Heart right ventricle (tissue), 16 donors: ENCODE measurements at regions of chr1 and their contacts with region 1.

Region 1: GRCh38 chr1:221741711-221742554 is at the start of gene DUSP10:
- DNase-seq: peak; percentile 96 to 99
- ATAC-seq: peak; percentile 93 to 98 (median 97)
- H3K4me3 ChIP-seq: peak within 1 kb of the TSS; percentile 54 to 86 (median 67)
- H3K27ac ChIP-seq: peak within 1 kb of the TSS; percentile 86 to 100 (median 98)
- H3K4me1 ChIP-seq: peaks cover 3 to 30% (median 18%) of the 10 kb centered on the region in 9 donors
- H3K27me3 ChIP-seq: no peaks in the 10 kb centered on the region
- CTCF ChIP-seq: no peak
- total RNA-seq, gene DUSP10: 1.8 to 9.7 (median 4.0) TPM

Region 2: GRCh38 chr1:221557013-221557412 is 184.9 kb before region 1 on chr1:
- intact Hi-C with region 1: loop called in 2 of 10 experiments (anchors 10 kb)
- DNase-seq: no peak
- ATAC-seq: no peak
- H3K4me3 ChIP-seq: no peak overlapping the region
- H3K27ac ChIP-seq: no peak overlapping the region
- H3K4me1 ChIP-seq: peaks cover 0 to 3% (median 0%) of the 10 kb centered on the region in 9 donors
- H3K27me3 ChIP-seq: no peaks in the 10 kb centered on the region
- CTCF ChIP-seq: no peak

Region 3: DNA sequence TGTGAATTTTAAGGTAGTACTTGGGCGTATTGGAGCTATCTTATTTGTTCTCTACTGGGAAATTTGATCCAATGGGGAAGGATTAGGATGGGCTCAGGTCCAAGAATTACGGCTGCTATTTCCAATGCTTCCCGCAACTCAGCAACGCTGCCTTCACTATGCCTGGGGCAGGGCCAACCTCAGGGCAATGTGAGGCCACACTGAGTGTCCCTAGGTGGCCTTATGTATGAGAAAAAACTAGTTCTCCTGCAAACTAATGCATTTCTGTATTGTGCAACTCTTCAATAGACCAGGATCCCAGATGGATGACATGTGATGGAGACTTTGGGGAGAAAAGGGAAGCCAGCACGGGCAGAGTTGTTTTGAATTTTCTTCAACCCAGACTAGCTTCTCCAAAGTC is 168.2 kb before region 1 on chr1:
- intact Hi-C with region 1: loop called in 2 of 10 experiments (anchors 5 to 10 kb)
- DNase-seq: peak in 1 of 2 donors; percentile 42
- ATAC-seq: peak in 7 of 8 donors; percentile 52 to 94 (median 65)
- H3K4me3 ChIP-seq: no peak overlapping the region
- H3K27ac ChIP-seq: no peak overlapping the region
- H3K4me1 ChIP-seq: peaks cover 0 to 13% (median 0%) of the 10 kb centered on the region in 9 donors
- H3K27me3 ChIP-seq: no peaks in the 10 kb centered on the region
- CTCF ChIP-seq: no peak

Region 4: DNA sequence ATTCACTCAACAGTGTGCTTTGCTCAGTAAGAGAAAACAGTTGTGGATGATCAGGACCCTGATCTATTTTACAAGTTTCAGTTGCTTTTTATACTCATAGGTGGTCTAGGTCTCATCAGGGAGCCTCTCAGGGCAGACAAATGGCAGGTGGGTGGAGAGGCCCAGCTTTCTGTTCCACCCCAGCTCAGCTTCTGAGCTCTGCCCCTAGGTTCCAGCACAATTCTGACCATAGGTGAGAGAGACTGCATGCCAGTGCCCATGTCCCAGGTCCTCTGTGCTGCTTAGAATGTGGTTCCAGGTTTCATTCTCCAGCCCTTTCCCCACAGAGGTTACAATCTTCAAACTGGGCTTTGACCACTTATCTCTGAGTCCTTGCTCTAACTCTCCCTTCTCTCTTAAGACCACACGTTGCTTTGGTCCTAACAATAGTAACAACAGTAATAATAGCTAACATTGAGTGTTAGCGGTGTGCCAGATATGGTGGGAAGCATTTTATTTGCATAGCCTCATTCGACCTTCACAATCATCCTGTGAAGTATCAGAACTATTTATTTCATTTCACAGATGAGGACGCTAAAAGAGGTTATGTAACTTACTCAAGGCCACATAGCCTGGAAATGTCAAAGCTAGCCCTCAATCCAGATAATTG is 19.5 kb after region 1 on chr1:
- intact Hi-C with region 1: no loop called
- DNase-seq: no peak
- ATAC-seq: peak in 1 of 8 donors; percentile 26
- H3K4me3 ChIP-seq: no peak overlapping the region
- H3K27ac ChIP-seq: no peak overlapping the region
- H3K4me1 ChIP-seq: peaks cover 0 to 16% (median 0%) of the 10 kb centered on the region in 9 donors
- H3K27me3 ChIP-seq: no peaks in the 10 kb centered on the region
- CTCF ChIP-seq: no peak

Region 5: GRCh38 chr1:222048094-222048595 is 306.2 kb after region 1 on chr1:
- intact Hi-C with region 1: loop called in 2 of 10 experiments (anchors 5 to 10 kb)
- DNase-seq: no peak
- ATAC-seq: no peak
- H3K4me3 ChIP-seq: no peak overlapping the region
- H3K27ac ChIP-seq: no peak overlapping the region
- H3K4me1 ChIP-seq: peaks cover 0 to 15% (median 10%) of the 10 kb centered on the region in 9 donors
- H3K27me3 ChIP-seq: no peaks in the 10 kb centered on the region
- CTCF ChIP-seq: no peak

Region 6: DNA sequence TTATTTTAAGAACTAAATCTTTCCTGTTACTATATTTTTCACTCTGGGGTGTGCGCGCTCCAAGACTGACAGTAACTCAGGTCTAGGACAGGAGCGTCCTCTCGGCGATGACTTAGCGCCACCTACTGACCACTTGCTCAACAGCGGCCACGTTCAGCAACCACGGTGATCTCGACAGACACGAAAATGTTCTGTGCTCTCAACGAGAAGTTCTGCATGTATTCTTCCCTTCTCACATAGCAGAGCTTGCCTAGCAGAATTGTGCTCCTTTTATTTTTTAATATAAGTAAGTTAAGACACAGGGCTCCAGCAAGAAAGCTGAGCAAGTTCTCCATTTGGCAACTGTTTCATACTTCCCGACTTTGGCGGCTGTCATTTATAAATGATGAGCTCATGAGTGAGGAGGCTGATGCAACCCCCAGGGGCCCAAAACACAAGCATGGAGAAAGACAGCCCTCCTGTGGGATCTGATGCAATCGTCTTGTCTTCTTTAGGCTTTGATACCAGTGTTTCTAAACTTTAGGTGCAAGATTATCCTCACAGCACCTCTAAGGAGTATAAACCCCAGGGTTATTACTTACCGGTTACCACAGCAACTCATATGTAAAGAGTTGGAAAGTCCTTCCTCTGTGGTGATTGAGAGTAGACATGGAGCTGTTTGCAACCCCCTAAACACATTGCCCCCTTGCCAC is 713.4 kb after region 1 on chr1:
- intact Hi-C with region 1: loop called in 2 of 10 experiments (anchors 10 kb)
- DNase-seq: peak; percentile 82 to 83
- ATAC-seq: peak; percentile 91 to 97 (median 96)
- H3K4me3 ChIP-seq: peak overlapping the region in 2 of 10 donors; percentile 12 to 31
- H3K27ac ChIP-seq: peak overlapping the region in 3 of 10 donors; percentile 36 to 58 (median 48)
- H3K4me1 ChIP-seq: peaks cover 0 to 13% (median 10%) of the 10 kb centered on the region in 9 donors
- H3K27me3 ChIP-seq: no peaks in the 10 kb centered on the region
- CTCF ChIP-seq: peak; percentile 76 to 97 (median 95)